Caco-2 (cell line): ENCODE measurements at regions of chr5 and their contacts with region 1.

Region 1: DNA sequence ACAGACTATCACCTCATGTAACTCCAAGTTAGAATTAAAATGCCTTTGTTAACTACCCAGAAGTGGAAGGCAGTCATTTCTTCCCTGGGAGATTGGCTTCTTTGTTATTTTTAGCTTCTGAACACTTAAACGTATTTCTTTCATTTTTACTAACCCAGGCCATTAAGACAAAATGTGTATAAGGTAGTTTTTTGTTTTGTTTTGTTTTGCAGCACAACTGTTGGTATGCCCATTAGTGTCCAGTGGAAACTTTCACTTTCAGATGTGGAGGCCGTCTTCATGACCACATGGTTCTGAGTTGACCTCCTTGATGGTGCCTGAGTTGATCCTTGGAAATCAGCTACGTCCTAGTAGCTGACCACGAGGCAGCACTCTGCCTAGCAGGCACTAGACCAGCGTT is 264.6 kb upstream of the ZNF608 start:
- DNase-seq: no peak
- H3K4me3 ChIP-seq: no peak overlapping the region
- H3K4me3 Mint-ChIP-seq: peak overlapping the region; percentile 36
- H3K27ac Mint-ChIP-seq: peak overlapping the region; percentile 83
- H3K4me1 ChIP-seq: peaks cover 60% of the 10 kb centered on the region
- H3K4me1 Mint-ChIP-seq: peaks cover 20% of the 10 kb centered on the region
- H3K27me3 ChIP-seq: no peaks in the 10 kb centered on the region
- H3K27me3 Mint-ChIP-seq: no peaks in the 10 kb centered on the region
- CTCF ChIP-seq: peak in 1 of 2 experiments; percentile 4

Region 2: DNA sequence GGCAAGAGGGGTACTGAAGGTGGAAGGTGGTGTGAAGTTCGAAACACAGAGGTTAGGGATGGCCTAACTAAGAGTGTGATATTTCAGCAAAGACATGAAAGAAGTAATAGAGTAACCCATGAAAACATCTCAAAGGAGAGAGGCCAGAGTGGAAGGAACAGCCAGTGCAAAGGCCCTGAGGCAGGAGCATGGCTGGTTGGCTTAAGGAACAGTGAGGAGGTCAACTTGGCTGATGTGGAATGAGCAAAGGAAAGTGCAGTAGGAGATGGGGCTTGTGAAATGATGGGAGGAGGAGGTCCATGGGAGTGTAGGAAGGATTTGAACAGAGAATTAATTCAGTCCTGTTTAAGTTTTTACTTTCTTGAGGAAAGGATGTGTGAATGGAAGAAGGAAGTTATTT is 86.3 kb before region 1 on chr5:
- CTCF ChIA-PET with region 1: no interaction called
- POLR2A ChIA-PET with region 1: no interaction called
- intact Hi-C with region 1: loop called (anchors 1 kb)
- DNase-seq: no peak
- H3K4me3 ChIP-seq: no peak overlapping the region
- H3K4me3 Mint-ChIP-seq: peak overlapping the region; percentile 12
- H3K27ac Mint-ChIP-seq: peak overlapping the region; percentile 57
- H3K4me1 ChIP-seq: peaks cover 50% of the 10 kb centered on the region
- H3K4me1 Mint-ChIP-seq: peaks cover 23% of the 10 kb centered on the region
- H3K27me3 ChIP-seq: no peaks in the 10 kb centered on the region
- H3K27me3 Mint-ChIP-seq: no peaks in the 10 kb centered on the region
- CTCF ChIP-seq: no peak

Region 3: DNA sequence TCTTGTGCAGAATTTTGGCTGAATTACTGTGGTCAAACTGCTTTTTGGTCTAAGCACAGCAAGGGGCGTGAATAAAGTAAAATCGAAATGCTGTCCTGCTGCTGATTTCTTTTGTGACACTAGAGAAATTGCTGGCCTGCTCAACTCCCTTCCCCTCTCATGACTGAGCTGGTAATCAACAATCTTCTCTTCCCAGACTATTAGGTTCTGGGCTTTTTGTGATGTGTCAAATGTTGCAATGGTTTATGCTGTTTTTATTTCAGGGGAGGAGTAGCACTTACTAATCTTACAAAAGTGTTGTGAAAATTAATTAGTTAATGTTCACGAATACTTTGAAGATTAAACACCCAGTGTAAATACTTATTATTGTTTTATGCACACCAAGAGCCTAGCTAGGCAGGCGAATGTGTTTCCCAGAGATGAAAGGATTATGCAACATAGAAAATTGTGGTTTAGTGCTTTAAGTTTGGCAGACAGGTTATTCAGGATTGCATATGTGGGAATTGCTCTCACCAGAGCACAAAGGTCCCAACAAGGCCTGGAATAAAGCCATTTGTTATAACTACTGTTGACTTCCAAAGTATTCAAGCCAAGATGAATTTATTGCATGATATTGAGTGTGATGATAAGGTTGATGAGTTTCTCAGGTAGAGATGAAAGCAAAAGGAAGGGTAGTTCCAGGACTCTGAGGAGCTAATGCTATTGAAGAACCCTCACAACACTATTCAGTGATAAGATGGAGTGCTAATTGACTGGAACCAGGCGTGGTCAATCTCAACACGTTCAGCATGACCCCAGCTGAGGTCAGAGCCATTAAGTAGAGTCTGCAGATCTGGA is 16.1 kb after region 1 on chr5:
- CTCF ChIA-PET with region 1: no interaction called
- POLR2A ChIA-PET with region 1: interaction called, 7 read pairs
- intact Hi-C with region 1: loop called (anchors 1 kb)
- DNase-seq: peak; percentile 70 to 84
- H3K4me3 ChIP-seq: no peak overlapping the region
- H3K4me3 Mint-ChIP-seq: peak overlapping the region; percentile 6
- H3K27ac Mint-ChIP-seq: peak overlapping the region; percentile 59
- H3K4me1 ChIP-seq: peaks cover 26% of the 10 kb centered on the region
- H3K4me1 Mint-ChIP-seq: peaks cover 46% of the 10 kb centered on the region
- H3K27me3 ChIP-seq: no peaks in the 10 kb centered on the region
- H3K27me3 Mint-ChIP-seq: no peaks in the 10 kb centered on the region
- CTCF ChIP-seq: no peak

Region 4: DNA sequence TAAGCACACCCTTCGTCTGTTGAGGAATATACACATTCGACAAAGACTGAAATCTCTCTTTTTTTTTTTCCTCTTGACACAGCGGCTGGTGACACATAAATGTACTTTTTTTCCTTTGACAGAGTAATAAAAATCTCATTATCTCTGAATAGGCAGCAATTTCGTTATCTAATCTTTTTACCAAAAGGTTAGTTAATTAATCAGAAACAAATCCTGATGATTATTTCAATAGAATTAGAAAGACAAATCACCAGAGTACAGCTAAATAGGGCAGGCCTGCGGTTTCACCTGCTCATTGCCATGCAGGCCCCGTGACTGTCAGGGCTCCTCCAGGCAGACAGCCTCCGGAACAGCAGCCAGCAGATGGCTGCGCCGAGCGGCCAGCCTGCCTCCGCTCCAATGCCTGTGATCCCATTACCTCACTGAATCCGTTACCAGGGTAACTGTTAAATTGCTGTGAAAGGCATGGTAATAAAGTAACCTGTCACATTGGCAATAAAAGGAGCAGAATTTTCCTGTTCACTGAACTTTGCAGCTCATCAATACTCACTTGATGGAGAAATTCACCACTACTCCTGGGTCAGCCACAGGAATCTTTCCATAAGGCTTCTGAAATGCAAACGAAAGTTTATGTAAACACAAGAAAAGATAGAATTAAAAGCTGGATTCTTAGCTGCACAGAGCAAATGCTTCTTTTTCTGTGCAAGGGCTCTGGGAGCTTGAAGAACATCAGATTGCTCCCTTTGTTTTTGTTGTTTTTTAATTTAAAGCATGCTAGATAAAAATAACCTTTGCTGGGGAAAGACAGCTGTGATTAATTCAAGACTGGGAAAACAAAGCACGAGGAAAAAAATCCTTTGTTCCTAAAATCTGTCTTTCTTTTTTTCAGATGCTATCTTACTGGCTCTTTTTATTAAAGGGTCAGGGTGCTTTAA is 401.8 kb after region 1 on chr5:
- CTCF ChIA-PET with region 1: no interaction called
- POLR2A ChIA-PET with region 1: no interaction called
- intact Hi-C with region 1: loop called (anchors 10 kb)
- DNase-seq: peak; percentile 70 to 75
- H3K4me3 ChIP-seq: no peak overlapping the region
- H3K4me3 Mint-ChIP-seq: peak overlapping the region; percentile 42
- H3K27ac Mint-ChIP-seq: peak overlapping the region; percentile 71
- H3K4me1 ChIP-seq: peaks cover 27% of the 10 kb centered on the region
- H3K4me1 Mint-ChIP-seq: peaks cover 31% of the 10 kb centered on the region
- H3K27me3 ChIP-seq: no peaks in the 10 kb centered on the region
- H3K27me3 Mint-ChIP-seq: no peaks in the 10 kb centered on the region
- CTCF ChIP-seq: peak in 1 of 2 experiments; percentile 59

Region 5: GRCh38 chr5:125659316-125660023 is 648.5 kb after region 1 on chr5:
- CTCF ChIA-PET with region 1: no interaction called
- POLR2A ChIA-PET with region 1: no interaction called
- intact Hi-C with region 1: loop called (anchors 10 kb)
- DNase-seq: no peak
- H3K4me3 ChIP-seq: no peak overlapping the region
- H3K4me3 Mint-ChIP-seq: no peak overlapping the region
- H3K27ac Mint-ChIP-seq: no peak overlapping the region
- H3K4me1 ChIP-seq: no peaks in the 10 kb centered on the region
- H3K4me1 Mint-ChIP-seq: peaks cover 1% of the 10 kb centered on the region
- H3K27me3 ChIP-seq: no peaks in the 10 kb centered on the region
- H3K27me3 Mint-ChIP-seq: no peaks in the 10 kb centered on the region
- CTCF ChIP-seq: no peak